A549 (cell line): ENCODE measurements at regions of chr10 and their contacts with region 1.

Region 1: GRCh38 chr10:117216611-117217195 is 19.4 kb downstream of the KCNK18 start:
- DNase-seq: peak; percentile 78 to 84
- ATAC-seq: peak; percentile 57 to 84
- H3K4me3 ChIP-seq: peak overlapping the region; percentile 63
- H3K27ac ChIP-seq: peak overlapping the region; percentile 74 to 94
- H3K4me1 ChIP-seq: peaks cover 37% of the 10 kb centered on the region
- CTCF ChIP-seq: peak; percentile 100
- EP300 ChIP-seq: no peak
- POLR2A ChIP-seq: no peak
- RAD21 ChIP-seq: peak; percentile 94 to 99

Region 2: GRCh38 chr10:117094856-117095255 is 121.8 kb before region 1 on chr10:
- CTCF ChIA-PET with region 1: no interaction called
- POLR2A ChIA-PET with region 1: no interaction called
- DNase-seq: no peak
- ATAC-seq: no peak
- H3K4me3 ChIP-seq: no peak overlapping the region
- H3K27ac ChIP-seq: no peak overlapping the region
- H3K4me1 ChIP-seq: no peaks in the 10 kb centered on the region
- CTCF ChIP-seq: no peak
- EP300 ChIP-seq: no peak
- POLR2A ChIP-seq: no peak
- RAD21 ChIP-seq: no peak

Region 3: DNA sequence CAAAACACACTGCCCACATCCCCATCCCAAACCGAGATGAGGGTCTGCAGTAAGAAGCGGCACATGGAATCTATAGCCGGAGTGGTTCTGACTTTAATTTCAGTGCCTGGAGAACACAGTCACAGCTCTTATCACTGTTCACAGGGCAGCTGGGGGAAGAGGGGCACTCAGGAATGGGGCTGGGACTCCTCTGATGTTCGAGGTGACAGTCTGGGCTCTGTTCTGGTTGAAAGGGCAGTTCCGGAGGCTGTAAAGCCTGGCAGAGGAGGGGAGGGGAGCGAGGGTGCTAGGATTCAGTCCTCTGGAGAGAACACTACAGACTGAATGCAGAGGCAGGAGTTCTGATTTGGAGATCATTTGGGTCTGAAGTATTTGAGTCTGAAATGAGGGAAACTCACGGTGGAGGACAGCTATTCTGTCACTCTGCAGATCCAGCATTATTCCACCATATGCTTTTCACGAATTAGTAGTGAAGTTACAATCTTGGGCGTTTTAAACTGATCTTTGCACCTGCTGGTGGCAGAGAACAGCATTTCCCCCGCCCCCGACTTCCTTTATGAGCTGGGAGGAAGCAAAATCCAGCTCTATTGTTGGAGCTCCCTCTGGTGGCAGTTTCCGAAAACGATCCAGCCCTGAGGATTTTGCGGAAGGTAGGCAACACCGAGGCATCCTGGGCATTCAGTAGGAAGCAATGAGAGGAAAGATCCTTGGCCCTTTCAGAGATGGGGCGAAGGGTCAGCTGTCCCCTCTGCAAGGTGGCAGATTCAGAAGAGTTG is 42.1 kb before region 1 on chr10:
- CTCF ChIA-PET with region 1: interaction called, 25 read pairs
- POLR2A ChIA-PET with region 1: no interaction called
- DNase-seq: peak; percentile 80 to 91
- ATAC-seq: peak; percentile 84 to 93
- H3K4me3 ChIP-seq: peak overlapping the region; percentile 55
- H3K27ac ChIP-seq: peak overlapping the region in 1 of 2 experiments; percentile 59; a peak in 3 of 6 replicates
- H3K4me1 ChIP-seq: 0 out of 3 replicates have a peak, but pooled peaks cover 4% of the 10 kb centered on the region
- CTCF ChIP-seq: peak; percentile 89
- EP300 ChIP-seq: no peak
- POLR2A ChIP-seq: no peak
- RAD21 ChIP-seq: peak; percentile 88 to 93

Region 4: DNA sequence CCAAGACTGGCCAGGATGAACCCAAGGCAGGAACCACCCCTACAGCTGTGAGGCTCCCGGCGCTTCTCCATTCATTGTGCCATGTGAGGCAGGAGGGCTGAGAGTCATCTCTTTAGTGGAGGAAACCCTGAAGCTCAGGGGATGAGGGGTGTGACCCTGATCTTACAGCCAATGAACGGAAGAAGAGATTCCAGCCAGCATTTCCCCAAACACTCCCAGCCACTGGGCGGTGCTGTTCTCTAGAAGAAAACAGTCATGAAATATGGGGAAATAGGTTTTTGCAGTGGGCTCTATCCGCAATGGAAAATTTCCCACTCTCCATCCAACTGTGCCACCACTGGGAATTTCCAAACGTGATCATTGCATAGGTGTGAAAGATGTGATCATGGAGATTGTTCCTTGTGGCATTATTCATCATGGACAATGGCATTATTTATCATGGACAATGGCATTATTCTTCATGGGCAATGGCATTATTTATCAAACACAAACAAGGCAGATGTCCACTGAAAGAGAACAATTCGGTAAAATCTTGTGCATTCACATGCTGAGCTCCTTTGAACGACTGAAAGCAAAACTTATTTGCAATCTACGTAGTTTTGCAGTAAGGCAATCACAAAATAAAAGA is 10.2 kb after region 1 on chr10:
- CTCF ChIA-PET with region 1: interaction called, 37 read pairs
- POLR2A ChIA-PET with region 1: no interaction called
- DNase-seq: peak; percentile 61 to 72
- ATAC-seq: peak in 1 of 2 experiments; percentile 91; a peak in 3 of 6 replicates
- H3K4me3 ChIP-seq: no peak overlapping the region
- H3K27ac ChIP-seq: no peak overlapping the region
- H3K4me1 ChIP-seq: peaks cover 9% of the 10 kb centered on the region
- CTCF ChIP-seq: peak; percentile 50
- EP300 ChIP-seq: no peak
- POLR2A ChIP-seq: no peak
- RAD21 ChIP-seq: peak; percentile 50 to 78

Region 5: GRCh38 chr10:117264782-117265181 is 48.1 kb after region 1 on chr10:
- CTCF ChIA-PET with region 1: interaction called, 20 read pairs
- POLR2A ChIA-PET with region 1: no interaction called
- DNase-seq: no peak
- ATAC-seq: no peak
- H3K4me3 ChIP-seq: no peak overlapping the region
- H3K27ac ChIP-seq: no peak overlapping the region
- H3K4me1 ChIP-seq: no peaks in the 10 kb centered on the region
- CTCF ChIP-seq: no peak
- EP300 ChIP-seq: no peak
- POLR2A ChIP-seq: no peak
- RAD21 ChIP-seq: no peak

Region 6: DNA sequence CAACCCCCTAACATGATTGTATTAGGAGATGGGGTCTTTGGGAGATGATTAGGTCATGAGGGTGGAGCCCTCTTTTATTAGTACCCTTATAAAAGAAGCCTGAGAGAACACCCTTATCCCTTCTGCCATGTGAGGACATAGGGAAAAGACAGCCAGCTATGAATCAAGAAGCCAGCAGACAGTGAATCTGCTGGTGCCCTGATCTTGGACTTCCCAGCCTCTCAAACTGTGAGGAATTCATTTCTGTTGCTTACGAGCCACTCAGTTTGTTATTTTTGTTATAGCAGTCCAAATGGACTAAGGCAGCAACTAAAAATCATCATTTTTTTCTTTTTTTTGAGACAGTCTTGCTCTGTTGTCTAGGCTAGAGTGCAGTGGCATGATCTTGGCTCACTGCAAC is 84.0 kb after region 1 on chr10:
- CTCF ChIA-PET with region 1: interaction called, 10 read pairs
- POLR2A ChIA-PET with region 1: no interaction called
- DNase-seq: no peak
- ATAC-seq: no peak
- H3K4me3 ChIP-seq: no peak overlapping the region
- H3K27ac ChIP-seq: no peak overlapping the region
- H3K4me1 ChIP-seq: no peaks in the 10 kb centered on the region
- CTCF ChIP-seq: no peak
- EP300 ChIP-seq: no peak
- POLR2A ChIP-seq: no peak
- RAD21 ChIP-seq: no peak

Region 7: DNA sequence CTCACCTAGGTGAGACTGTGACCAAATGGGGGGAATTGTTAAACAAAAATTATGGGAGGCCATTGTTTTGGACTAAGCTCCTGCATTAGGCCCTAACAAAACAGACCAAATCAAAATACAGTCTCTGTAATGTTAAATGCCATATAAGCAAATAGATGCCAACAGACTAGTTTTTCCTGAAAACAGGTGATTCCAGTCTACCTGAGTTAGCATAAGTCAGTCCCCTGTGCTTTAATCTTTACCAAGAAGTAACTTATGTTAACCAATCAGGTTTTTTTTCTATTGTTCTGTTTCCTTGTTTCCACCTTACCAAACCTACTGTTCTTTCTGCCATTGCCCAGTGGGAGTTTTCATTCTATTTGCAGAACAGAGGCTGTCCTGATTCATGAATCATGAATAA is 110.6 kb after region 1 on chr10:
- CTCF ChIA-PET with region 1: interaction called, 54 read pairs
- POLR2A ChIA-PET with region 1: no interaction called
- DNase-seq: no peak
- ATAC-seq: no peak
- H3K4me3 ChIP-seq: no peak overlapping the region
- H3K27ac ChIP-seq: no peak overlapping the region
- H3K4me1 ChIP-seq: peaks cover 37% of the 10 kb centered on the region; the same call in 2 of the 3 replicates
- CTCF ChIP-seq: no peak
- EP300 ChIP-seq: no peak
- POLR2A ChIP-seq: no peak
- RAD21 ChIP-seq: no peak

Region 8: GRCh38 chr10:117375360-117376178 is 158.9 kb after region 1 on chr10 and contains the start of gene PDZD8:
- CTCF ChIA-PET with region 1: interaction called, 13 read pairs
- POLR2A ChIA-PET with region 1: no interaction called
- DNase-seq: peak; percentile 77 to 93
- ATAC-seq: peak; percentile 80 to 87
- H3K4me3 ChIP-seq: peak within 1 kb of the TSS; percentile 97
- H3K27ac ChIP-seq: peak within 1 kb of the TSS; percentile 96
- H3K4me1 ChIP-seq: peaks cover 17% of the 10 kb centered on the region
- CTCF ChIP-seq: no peak
- EP300 ChIP-seq: no peak
- POLR2A ChIP-seq: peak; percentile 66
- RAD21 ChIP-seq: no peak
- polyA plus RNA-seq, gene PDZD8: 76.1 and 76.7 TPM in 2 replicates